A673 (cell line): ENCODE measurements at regions of chr5 and their contacts with region 1.

Region 1: DNA sequence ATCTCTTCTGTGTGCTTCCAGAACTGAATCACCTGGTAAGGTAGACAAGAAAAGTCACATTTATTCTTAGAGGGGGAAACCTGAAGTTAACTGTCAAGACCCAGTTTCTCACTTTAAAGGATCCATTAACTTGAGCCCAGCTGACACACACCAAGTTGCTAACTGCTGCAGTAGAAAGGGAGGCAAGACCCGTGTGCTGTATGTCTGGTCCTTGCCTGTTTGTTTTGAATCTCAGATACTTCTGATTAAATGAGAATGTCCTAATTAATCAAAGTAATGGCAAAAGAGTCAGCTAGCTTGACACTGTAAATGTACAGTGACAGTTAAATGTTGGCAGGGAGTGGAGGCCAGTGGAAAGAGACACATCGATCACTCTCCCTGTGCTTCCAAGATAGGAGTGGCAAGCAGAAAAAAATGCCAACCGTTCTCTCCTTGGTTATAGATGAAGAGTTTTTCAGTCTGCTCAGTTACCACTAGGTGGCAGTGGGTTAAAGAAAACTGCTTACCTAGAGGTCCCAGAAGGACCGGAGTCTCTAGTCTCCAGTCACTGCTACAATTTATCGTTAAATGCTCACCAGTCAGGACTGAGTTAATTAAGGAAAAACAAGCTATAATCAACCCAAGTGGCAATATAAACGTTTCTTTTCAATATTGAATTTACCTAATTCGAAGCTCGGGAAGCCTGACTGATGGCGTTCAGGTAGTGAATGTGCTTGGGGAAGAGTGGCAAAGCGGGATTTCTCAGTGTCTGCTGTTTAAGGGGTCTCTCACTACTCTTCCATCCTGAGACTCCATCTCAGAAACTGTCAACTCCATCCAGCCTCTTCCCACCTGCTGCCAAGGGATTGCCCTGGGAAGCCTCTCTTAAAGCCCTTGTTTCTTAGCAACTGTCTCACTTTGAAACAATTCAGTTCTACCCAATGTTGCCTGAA is 18.4 kb downstream of the LSM11 start:
- DNase-seq: peak; percentile 72
- H3K4me3 ChIP-seq: no peak overlapping the region
- H3K27ac ChIP-seq: no peak overlapping the region
- H3K4me1 ChIP-seq: no peaks in the 10 kb centered on the region
- H3K27me3 ChIP-seq: no peaks in the 10 kb centered on the region
- CTCF ChIP-seq: peak; percentile 73

Region 2: DNA sequence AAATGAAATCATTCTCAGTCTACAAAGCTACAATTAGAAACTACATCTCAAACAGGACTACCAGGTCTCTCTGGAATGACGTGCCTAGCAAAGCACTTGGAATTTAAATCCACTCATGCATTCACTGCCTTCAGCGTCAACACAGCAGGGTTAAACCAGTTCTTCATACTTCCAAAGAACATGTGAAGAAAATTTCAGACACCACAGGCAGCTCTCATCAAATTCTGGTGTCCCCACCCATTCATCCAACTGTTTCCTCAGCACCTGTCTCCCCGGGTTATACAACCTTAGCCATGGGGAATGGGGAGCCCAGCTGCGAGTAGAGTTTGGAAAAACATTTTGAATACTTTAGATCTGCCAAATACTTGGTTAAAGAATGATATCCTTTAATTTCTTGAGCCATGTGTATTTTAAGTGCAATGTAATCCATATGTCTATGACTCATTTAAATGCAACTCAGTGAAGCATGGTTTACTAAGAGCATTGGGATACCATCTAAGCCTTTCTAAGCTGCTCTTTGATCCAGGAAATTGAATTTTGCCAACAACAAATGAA is 203.8 kb before region 1 on chr5:
- CTCF ChIA-PET with region 1: no interaction called
- POLR2A ChIA-PET with region 1: no interaction called
- intact Hi-C with region 1: no loop called
- DNase-seq: no peak
- H3K4me3 ChIP-seq: no peak overlapping the region
- H3K27ac ChIP-seq: no peak overlapping the region
- H3K4me1 ChIP-seq: no peaks in the 10 kb centered on the region
- H3K27me3 ChIP-seq: no peaks in the 10 kb centered on the region
- CTCF ChIP-seq: no peak

Region 3: DNA sequence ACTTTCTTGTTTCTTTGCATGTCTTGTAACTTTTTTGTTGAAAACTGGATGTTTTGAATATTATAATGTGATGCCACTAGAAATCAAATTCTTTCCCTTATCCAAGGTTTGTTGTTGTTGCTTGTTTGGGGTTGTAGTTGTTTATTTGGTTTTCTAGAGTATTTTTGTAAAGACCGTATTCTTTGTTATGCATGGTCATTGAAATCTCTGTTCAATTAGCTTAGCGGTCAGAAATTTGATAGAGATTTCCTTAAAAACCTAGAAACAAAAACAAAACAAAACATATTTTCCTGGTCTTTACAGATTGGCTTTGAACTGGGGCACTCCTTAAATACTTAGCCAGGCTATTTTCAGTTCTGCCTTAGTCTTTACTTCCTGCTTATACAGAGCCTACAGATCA is 131.6 kb before region 1 on chr5:
- CTCF ChIA-PET with region 1: no interaction called
- POLR2A ChIA-PET with region 1: no interaction called
- intact Hi-C with region 1: no loop called
- DNase-seq: no peak
- H3K4me3 ChIP-seq: no peak overlapping the region
- H3K27ac ChIP-seq: no peak overlapping the region
- H3K4me1 ChIP-seq: no peaks in the 10 kb centered on the region
- H3K27me3 ChIP-seq: no peaks in the 10 kb centered on the region
- CTCF ChIP-seq: no peak

Region 4: DNA sequence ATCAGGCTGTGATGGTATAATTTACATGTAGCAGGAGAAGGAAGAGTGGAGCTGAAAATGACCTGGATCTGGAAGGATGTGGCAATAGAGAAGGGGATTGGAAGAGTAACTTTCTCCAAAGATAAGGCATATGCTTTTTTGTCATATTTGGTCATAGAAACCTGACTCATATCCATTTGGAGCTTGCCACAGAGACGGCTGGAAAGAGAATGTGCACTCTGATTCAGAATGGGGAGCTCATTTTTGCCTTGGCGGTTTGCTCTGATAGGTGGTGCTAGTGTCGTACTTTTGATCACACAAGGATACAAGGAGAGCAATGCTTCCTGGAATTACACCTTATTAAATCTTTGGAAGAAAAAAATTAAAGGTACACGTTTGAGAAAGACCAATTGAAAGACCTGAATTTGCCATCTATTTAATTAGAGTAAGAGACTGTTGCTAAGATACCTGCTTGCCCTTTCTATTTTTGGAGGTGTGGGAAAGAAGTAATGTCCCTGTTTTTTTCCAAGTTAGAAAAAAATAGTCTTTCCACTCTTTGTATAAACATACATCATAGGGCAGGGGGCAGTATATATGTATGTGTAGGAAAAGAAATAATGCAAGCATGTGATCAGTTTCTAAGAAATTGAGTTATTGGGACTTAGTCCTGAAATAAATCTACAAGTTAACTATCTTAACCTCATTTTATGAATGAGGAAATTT is 13.0 kb before region 1 on chr5:
- CTCF ChIA-PET with region 1: interaction called, 12 read pairs
- POLR2A ChIA-PET with region 1: no interaction called
- intact Hi-C with region 1: no loop called
- DNase-seq: no peak
- H3K4me3 ChIP-seq: no peak overlapping the region
- H3K27ac ChIP-seq: no peak overlapping the region
- H3K4me1 ChIP-seq: peaks cover 4% of the 10 kb centered on the region
- H3K27me3 ChIP-seq: no peaks in the 10 kb centered on the region
- CTCF ChIP-seq: no peak

Region 5: GRCh38 chr5:157948738-157949410 is 186.9 kb after region 1 on chr5:
- CTCF ChIA-PET with region 1: no interaction called
- POLR2A ChIA-PET with region 1: no interaction called
- intact Hi-C with region 1: loop called (anchors 5 kb)
- DNase-seq: peak; percentile 93
- H3K4me3 ChIP-seq: no peak overlapping the region
- H3K27ac ChIP-seq: peak overlapping the region; percentile 79
- H3K4me1 ChIP-seq: peaks cover 30% of the 10 kb centered on the region
- H3K27me3 ChIP-seq: no peaks in the 10 kb centered on the region
- CTCF ChIP-seq: peak; percentile 83

Region 6: GRCh38 chr5:157994906-157995519 is 233.1 kb after region 1 on chr5:
- CTCF ChIA-PET with region 1: no interaction called
- POLR2A ChIA-PET with region 1: no interaction called
- intact Hi-C with region 1: loop called (anchors 5 kb)
- DNase-seq: peak; percentile 64
- H3K4me3 ChIP-seq: no peak overlapping the region
- H3K27ac ChIP-seq: no peak overlapping the region
- H3K4me1 ChIP-seq: no peaks in the 10 kb centered on the region
- H3K27me3 ChIP-seq: no peaks in the 10 kb centered on the region
- CTCF ChIP-seq: peak; percentile 58